Mammary epithelial cell (primary cell): ENCODE measurements at regions of chr20 and their contacts with region 1.

Region 1: GRCh38 chr20:4272225-4272624 is 256.9 kb upstream of the RNF24 start:
- DNase-seq: peak; percentile 56
- H3K4me3 ChIP-seq: no peak overlapping the region
- H3K27ac ChIP-seq: no peak overlapping the region
- H3K4me1 ChIP-seq: peaks cover 2% of the 10 kb centered on the region
- H3K27me3 ChIP-seq: no peaks in the 10 kb centered on the region
- CTCF ChIP-seq: no peak

Region 2: GRCh38 chr20:4187147-4187546 is 85.1 kb before region 1 on chr20:
- CTCF ChIA-PET with region 1: no interaction called
- dilution Hi-C with region 1: loop called (anchors 5 kb)
- in situ Hi-C with region 1: no loop called
- intact Hi-C with region 1: no loop called
- DNase-seq: no peak
- H3K4me3 ChIP-seq: no peak overlapping the region
- H3K27ac ChIP-seq: no peak overlapping the region
- H3K4me1 ChIP-seq: peaks cover 13% of the 10 kb centered on the region
- H3K27me3 ChIP-seq: no peaks in the 10 kb centered on the region
- CTCF ChIP-seq: no peak

Region 3: GRCh38 chr20:4306206-4306605 is 34.0 kb after region 1 on chr20:
- CTCF ChIA-PET with region 1: no interaction called
- dilution Hi-C with region 1: loop called (anchors 5 kb)
- in situ Hi-C with region 1: no loop called
- intact Hi-C with region 1: no loop called
- DNase-seq: no peak
- H3K4me3 ChIP-seq: no peak overlapping the region
- H3K27ac ChIP-seq: no peak overlapping the region
- H3K4me1 ChIP-seq: no peaks in the 10 kb centered on the region
- H3K27me3 ChIP-seq: no peaks in the 10 kb centered on the region
- CTCF ChIP-seq: no peak

Region 4: GRCh38 chr20:4585104-4585753 is 313.0 kb after region 1 on chr20:
- CTCF ChIA-PET with region 1: no interaction called
- dilution Hi-C with region 1: loop called (anchors 5 kb)
- in situ Hi-C with region 1: no loop called
- intact Hi-C with region 1: no loop called
- DNase-seq: peak; percentile 68
- H3K4me3 ChIP-seq: no peak overlapping the region
- H3K27ac ChIP-seq: peak overlapping the region; percentile 80
- H3K4me1 ChIP-seq: peaks cover 14% of the 10 kb centered on the region
- H3K27me3 ChIP-seq: no peaks in the 10 kb centered on the region
- CTCF ChIP-seq: no peak